MCF 10A (cell line): ENCODE measurements at regions of chr11 and their contacts with region 1.

Region 1: GRCh38 chr11:10366568-10367370 is 61.9 kb downstream of the ADM start:
- DNase-seq: peak; percentile 89
- H3K4me3 Mint-ChIP-seq: no peak overlapping the region
- H3K27ac Mint-ChIP-seq: peak overlapping the region; percentile 72
- H3K4me1 Mint-ChIP-seq: peaks cover 10% of the 10 kb centered on the region
- H3K27me3 Mint-ChIP-seq: no peaks in the 10 kb centered on the region
- CTCF ChIP-seq: peak; percentile 78

Region 2: DNA sequence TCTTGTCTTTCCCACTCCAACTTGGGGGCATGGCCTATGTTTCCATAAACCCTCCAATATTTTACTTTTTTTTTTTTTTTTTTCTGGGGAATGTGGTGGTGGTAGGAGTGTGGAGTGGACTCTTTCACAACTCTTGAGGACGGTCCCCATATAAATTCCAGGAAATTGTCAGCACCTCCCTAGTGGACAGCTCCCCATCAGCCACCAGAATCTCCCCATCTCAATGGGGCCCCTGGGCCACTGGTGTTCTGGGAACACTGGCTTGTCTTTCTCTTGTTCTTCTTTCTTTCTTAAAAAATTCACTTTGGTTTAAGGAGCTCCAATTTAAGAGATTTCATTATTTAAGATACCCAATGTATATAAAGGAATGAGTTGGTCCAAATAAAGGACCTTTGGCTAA is 12.3 kb after region 1 on chr11:
- CTCF ChIA-PET with region 1: interaction called, 24 read pairs
- POLR2A ChIA-PET with region 1: no interaction called
- intact Hi-C with region 1: no loop called
- DNase-seq: peak; percentile 40
- H3K4me3 Mint-ChIP-seq: no peak overlapping the region
- H3K27ac Mint-ChIP-seq: no peak overlapping the region
- H3K4me1 Mint-ChIP-seq: no peaks in the 10 kb centered on the region
- H3K27me3 Mint-ChIP-seq: peaks cover 14% of the 10 kb centered on the region
- CTCF ChIP-seq: no peak